Ovary (tissue), 10 donors: ENCODE measurements at regions of chr16 and their contacts with region 1.

Region 1: DNA sequence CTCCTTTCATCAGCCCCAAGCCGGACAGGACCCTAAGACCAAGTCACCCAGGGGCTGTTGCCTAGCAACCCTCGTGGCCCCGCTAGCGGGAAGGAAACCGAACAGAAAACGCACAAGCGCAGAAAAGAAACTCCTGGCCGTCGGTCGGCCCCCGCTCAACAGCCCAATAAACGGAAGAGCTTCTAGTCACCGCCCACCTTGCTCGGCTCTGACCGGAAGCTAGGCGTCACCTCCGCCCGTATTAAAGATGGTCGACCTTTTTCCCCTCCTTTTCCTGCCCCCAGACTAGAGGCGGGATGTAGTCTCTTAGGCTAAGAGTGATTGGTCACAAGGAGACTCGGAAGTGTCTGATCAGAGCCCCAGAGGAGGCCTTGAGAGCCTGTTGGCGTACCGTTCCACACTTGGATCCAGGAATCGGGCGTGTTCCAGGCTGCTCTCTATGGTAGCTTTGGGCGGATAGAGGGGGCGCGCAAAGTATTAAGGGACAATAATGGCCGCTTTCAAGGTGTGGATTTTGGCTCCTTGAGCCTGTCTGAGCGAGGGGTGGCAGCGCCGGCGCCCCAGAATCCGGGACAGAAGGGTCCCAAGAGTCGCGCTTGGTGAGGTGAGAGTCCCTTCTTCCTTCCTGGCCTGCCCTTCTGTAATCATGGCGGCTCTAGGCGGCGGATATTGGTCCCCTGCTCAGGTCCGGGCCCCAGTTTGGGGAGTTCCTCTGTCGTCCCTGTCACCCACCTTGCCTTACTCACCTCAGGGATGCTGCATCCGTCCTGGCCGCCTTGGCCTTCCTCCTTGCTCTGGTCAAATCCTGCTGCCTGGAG is at the starts of genes DHX38 and TXNL4B:
- DNase-seq: peak; percentile 89 to 94 (median 92)
- H3K4me3 ChIP-seq: peak within 1 kb of the TSS; percentile 89
- H3K27ac ChIP-seq: peak within 1 kb of the TSS; percentile 81 to 82
- H3K4me1 ChIP-seq: peaks cover 6% of the 10 kb centered on the region
- H3K27me3 ChIP-seq: no peaks in the 10 kb centered on the region
- CTCF ChIP-seq: peak in 1 of 3 donors; percentile 22
- EP300 ChIP-seq: no peak
- POLR2A ChIP-seq: peak; percentile 77
- total RNA-seq, gene DHX38: 33.0 to 70.5 (median 59.1) TPM
- total RNA-seq, gene TXNL4B: 10.6 to 23.1 (median 14.7) TPM

Region 2: GRCh38 chr16:71985262-71985974 is 108.2 kb before region 1 on chr16:
- intact Hi-C with region 1: no loop called
- DNase-seq: no peak
- H3K4me3 ChIP-seq: no peak overlapping the region
- H3K27ac ChIP-seq: no peak overlapping the region
- H3K4me1 ChIP-seq: no peaks in the 10 kb centered on the region
- H3K27me3 ChIP-seq: no peaks in the 10 kb centered on the region
- CTCF ChIP-seq: no peak
- EP300 ChIP-seq: no peak
- POLR2A ChIP-seq: no peak

Region 3: DNA sequence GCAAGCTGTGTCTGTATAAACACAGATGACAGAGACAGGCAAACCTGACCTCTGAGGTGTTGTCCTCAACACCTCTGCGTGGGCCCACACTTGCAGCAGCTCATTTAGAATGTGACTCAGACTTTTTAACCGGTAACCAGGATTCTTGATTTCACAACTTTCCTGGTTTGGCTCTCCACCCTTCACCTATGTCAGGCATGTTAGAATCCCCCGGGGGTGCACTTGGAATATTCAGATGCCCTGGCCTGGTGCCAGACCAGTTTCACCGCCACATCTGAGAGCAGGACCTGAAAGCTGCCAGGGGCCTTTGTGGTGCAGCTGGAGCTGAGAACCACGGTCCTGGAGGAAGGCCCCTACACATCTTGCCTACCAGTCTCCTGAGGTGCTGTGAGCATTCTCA is 80.3 kb before region 1 on chr16:
- intact Hi-C with region 1: loop called in 1 of 4 experiments (anchors 10 kb)
- DNase-seq: peak; percentile 37 to 69 (median 57)
- H3K4me3 ChIP-seq: no peak overlapping the region
- H3K27ac ChIP-seq: peak overlapping the region in 1 of 2 donors; percentile 42
- H3K4me1 ChIP-seq: peaks cover 8% of the 10 kb centered on the region
- H3K27me3 ChIP-seq: no peaks in the 10 kb centered on the region
- CTCF ChIP-seq: no peak
- EP300 ChIP-seq: no peak
- POLR2A ChIP-seq: no peak

Region 4: GRCh38 chr16:72025759-72026114 is 67.9 kb before region 1 on chr16:
- intact Hi-C with region 1: no loop called
- DNase-seq: no peak
- H3K4me3 ChIP-seq: no peak overlapping the region
- H3K27ac ChIP-seq: no peak overlapping the region
- H3K4me1 ChIP-seq: no peaks in the 10 kb centered on the region
- H3K27me3 ChIP-seq: no peaks in the 10 kb centered on the region
- CTCF ChIP-seq: no peak
- EP300 ChIP-seq: no peak
- POLR2A ChIP-seq: no peak